ENCODE measurements at regions of chr13 and their contacts with region 1.

Region 1: GRCh38 chr13:77779552-77780272 is 82.2 kb downstream of the SLAIN1 start:
- DNase-seq: peak in 1 of 2 donors; percentile 35
- H3K4me3 ChIP-seq: no peak overlapping the region
- H3K27ac ChIP-seq: no peak overlapping the region
- H3K4me1 ChIP-seq: no peaks in the 10 kb centered on the region
- H3K27me3 ChIP-seq: no peaks in the 10 kb centered on the region
- CTCF ChIP-seq: peak; percentile 49 to 74 (median 58)
- POLR2A ChIP-seq: no peak

Region 2: GRCh38 chr13:77714119-77714755 is 65.5 kb before region 1 on chr13:
- intact Hi-C with region 1: no loop called
- DNase-seq: no peak
- H3K4me3 ChIP-seq: no peak overlapping the region
- H3K27ac ChIP-seq: no peak overlapping the region
- H3K4me1 ChIP-seq: no peaks in the 10 kb centered on the region
- H3K27me3 ChIP-seq: no peaks in the 10 kb centered on the region
- CTCF ChIP-seq: no peak
- POLR2A ChIP-seq: no peak

Region 3: DNA sequence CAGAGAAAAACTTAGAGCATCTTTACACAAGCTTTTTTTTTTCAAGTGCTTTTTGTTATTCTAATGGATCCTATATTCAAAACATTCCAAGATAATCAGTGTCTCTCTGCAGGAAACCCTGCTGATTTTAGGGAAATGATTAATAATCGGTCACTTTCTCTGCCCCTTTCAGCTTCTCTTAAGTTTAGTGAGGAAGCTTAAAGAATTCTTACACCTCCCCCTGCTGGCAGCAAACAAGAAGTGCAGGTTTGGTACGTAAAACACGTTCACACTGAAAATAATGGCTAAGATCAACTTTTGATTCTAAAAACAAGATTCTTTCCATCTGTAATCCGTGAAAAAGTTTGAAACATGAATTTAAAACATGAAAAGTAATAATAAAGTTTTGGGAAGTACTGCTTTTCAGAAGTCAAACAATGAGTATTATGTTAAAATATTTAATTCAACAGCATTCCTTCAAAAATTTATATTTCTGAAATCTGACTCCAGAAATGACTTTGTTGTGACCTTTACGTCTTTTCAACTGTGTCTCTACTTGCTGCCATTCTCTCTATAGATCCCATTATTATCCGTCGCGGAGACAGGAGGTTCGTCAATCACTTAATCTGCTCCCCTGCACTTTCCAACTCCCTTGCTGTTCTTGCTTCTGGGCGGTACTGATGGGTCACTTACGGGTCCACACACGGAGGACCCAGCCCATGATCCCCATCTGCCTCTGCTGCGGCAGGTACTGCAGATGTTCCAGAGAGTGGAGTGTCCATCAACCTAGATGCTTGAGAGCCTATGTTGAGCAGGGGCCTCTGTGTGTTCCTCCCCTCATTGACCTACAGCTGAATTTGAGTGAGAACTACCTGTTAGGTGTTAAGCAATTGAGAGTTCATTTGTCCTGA is 342.0 kb after region 1 on chr13:
- intact Hi-C with region 1: loop called (anchors 2 kb)
- DNase-seq: peak; percentile 21 to 44
- H3K4me3 ChIP-seq: no peak overlapping the region
- H3K27ac ChIP-seq: no peak overlapping the region
- H3K4me1 ChIP-seq: no peaks in the 10 kb centered on the region
- H3K27me3 ChIP-seq: no peaks in the 10 kb centered on the region
- CTCF ChIP-seq: peak; percentile 64 to 87 (median 76)
- POLR2A ChIP-seq: no peak

Measured in uterus (tissue), 4 donors.